K562 (cell line): ENCODE measurements at regions of chr10 and their contacts with region 1.

Region 1: GRCh38 chr10:112949875-112950507 is at the start of gene TCF7L2:
- DNase-seq: peak; percentile 81 to 91 (median 82)
- ATAC-seq: peak; percentile 95
- H3K4me3 ChIP-seq: peak within 1 kb of the TSS; percentile 46
- H3K27ac ChIP-seq: peak within 1 kb of the TSS; percentile 55; the same call in 1 of the 3 replicates
- H3K4me1 ChIP-seq: peaks cover 4 to 10% of the 10 kb centered on the region in 2 experiments; a peak in 4 of 5 replicates
- H3K27me3 ChIP-seq: no peaks in the 10 kb centered on the region
- CTCF ChIP-seq: no peak
- EP300 ChIP-seq: no peak
- POLR2A ChIP-seq: peak; percentile 47; the same call in 1 of the 2 replicates
- RAD21 ChIP-seq: no peak
- polyA plus RNA-seq, gene TCF7L2: 0.52 to 0.92 TPM

Region 2: GRCh38 chr10:112775381-112775780 is 174.6 kb before region 1 on chr10:
- CTCF ChIA-PET with region 1: no interaction called
- POLR2A ChIA-PET with region 1: no interaction called
- in situ Hi-C with region 1: no loop called
- intact Hi-C with region 1: no loop called
- DNase-seq: no peak
- ATAC-seq: no peak
- H3K4me3 ChIP-seq: no peak overlapping the region
- H3K27ac ChIP-seq: no peak overlapping the region
- H3K4me1 ChIP-seq: no peaks in the 10 kb centered on the region
- H3K27me3 ChIP-seq: no peaks in the 10 kb centered on the region
- CTCF ChIP-seq: no peak
- EP300 ChIP-seq: no peak
- POLR2A ChIP-seq: no peak
- RAD21 ChIP-seq: no peak

Region 3: DNA sequence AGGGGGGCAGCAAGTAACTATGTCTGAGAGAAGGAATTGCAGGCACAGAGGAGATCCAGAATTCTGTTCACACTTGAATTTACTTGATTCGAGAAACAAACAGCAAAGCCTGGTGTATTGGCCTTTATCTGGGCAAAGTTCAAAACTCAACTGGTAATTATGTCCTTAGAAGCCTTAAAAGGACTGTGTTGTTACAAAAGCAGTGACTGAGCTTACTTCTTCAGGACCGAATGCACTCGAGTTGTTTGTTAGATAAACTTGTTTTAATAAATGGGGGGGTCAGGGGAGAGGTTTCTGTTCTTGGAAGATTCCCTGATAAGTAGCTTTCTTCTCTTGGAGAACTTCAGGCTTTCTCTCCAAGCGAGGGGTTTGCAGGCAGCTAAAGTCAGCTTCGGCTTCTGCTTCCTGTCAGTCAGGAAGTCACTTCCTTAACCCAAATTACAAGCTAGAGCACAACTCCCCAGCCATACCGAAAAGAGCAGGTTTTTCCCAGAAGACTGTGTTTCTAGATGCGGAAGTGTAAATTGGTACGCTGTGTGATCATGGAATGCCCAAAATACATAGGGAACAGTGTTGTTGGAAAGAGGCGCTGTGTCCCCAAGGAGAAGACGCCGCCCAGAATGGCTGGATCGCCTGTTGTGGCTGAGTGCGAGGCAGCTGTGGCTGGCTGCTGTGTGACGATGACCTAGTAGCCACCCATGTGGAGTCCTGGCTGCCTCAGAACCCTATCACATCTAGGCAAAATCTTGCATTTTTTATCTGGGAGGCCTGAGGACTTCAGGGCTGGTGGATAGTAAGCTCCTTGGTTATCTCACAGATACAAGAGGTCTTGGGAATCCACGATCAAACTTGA is 110.4 kb after region 1 on chr10:
- CTCF ChIA-PET with region 1: no interaction called
- POLR2A ChIA-PET with region 1: no interaction called
- in situ Hi-C with region 1: no loop called
- intact Hi-C with region 1: loop called (anchors 5 kb)
- DNase-seq: peak; percentile 62 to 87 (median 72)
- ATAC-seq: peak; percentile 84
- H3K4me3 ChIP-seq: peak overlapping the region; percentile 31
- H3K27ac ChIP-seq: peak overlapping the region; percentile 98
- H3K4me1 ChIP-seq: peaks cover 14 to 65% of the 10 kb centered on the region in 2 experiments
- H3K27me3 ChIP-seq: no peaks in the 10 kb centered on the region
- CTCF ChIP-seq: no peak
- EP300 ChIP-seq: peak; percentile 91
- POLR2A ChIP-seq: peak; percentile 70; the same call in 1 of the 2 replicates
- RAD21 ChIP-seq: no peak